ENCODE measurements at regions of chr22 and their contacts with region 1.

Region 1: GRCh38 chr22:23225724-23226496 is 45.6 kb downstream of the BCR start:
- DNase-seq: peak; percentile 84
- H3K4me3 ChIP-seq: peak overlapping the region in 2 of 3 experiments; percentile 27 to 34
- H3K27ac ChIP-seq: peak overlapping the region; percentile 91
- H3K4me1 ChIP-seq: peaks cover 47% of the 10 kb centered on the region
- H3K27me3 ChIP-seq: no peaks in the 10 kb centered on the region
- CTCF ChIP-seq: no peak

Region 2: DNA sequence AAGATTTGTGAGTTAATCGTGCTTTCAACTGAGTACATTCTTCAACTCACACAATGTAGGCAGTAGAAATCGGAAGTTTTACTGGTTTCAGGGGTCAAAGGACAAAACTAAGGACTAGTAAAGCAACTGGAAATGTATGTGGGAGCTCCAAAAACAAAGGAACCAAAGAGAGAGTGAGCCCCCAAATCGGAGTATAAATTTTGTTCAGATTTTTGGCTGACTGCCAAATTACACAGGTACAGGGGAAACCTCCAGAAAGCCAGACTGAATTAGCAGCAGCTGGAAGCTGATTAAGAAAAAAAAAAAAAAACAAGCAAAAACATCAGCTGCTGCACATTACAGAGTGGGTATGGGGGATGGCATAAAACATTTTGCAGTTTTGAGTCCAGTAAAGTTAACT is 230.7 kb before region 1 on chr22:
- CTCF ChIA-PET with region 1: no interaction called
- dilution Hi-C with region 1: no loop called
- in situ Hi-C with region 1: no loop called
- intact Hi-C with region 1: no loop called
- DNase-seq: no peak
- H3K4me3 ChIP-seq: no peak overlapping the region
- H3K27ac ChIP-seq: no peak overlapping the region
- H3K4me1 ChIP-seq: no peaks in the 10 kb centered on the region
- H3K27me3 ChIP-seq: no peaks in the 10 kb centered on the region
- CTCF ChIP-seq: no peak

Region 3: DNA sequence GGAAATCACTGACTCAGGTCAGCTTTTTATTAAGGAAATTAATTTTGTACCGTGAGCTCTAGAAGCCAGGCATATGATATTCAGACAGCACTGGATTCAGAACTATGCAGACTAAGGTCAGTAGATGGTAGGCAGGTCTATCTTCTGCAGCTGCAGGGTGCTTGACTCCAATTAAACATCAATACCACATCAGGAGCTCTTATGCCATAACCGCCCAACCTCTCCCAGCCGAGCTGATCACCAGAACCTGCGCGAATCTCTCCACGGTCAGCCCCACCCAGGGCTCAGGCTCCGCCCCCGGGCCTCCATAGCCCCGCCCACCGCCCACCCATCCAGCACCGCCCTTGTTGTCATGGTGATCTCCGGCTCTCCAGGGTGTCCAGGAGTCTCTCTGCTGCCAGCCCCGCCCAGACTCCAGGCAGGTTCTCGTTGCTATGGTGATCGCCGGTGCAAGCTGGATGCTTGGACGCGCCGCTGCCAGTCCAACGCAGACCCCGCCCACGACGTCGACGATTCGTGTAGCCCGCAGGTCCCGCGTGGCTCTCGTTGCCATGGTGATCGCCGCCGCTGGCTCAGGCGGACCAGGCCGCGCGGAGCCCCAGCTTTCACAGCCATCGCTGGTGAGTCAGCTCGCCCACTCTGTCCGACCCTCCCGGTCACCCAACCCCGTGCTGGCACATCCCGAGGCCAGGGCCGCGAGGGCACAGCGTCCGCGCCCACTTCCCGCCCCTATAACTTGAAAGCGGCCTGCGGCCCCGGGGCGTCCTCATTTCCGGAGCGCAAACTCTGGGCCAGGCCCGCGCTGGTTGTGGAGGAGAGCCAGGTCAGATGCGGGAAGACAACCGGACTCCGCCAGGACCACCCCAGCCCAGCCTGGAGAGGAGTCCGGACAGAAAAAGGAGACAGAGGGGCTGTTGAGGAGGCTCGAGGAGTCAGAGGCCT is 80.7 kb before region 1 on chr22 and contains the start of gene RAB36:
- CTCF ChIA-PET with region 1: no interaction called
- dilution Hi-C with region 1: no loop called
- in situ Hi-C with region 1: no loop called
- intact Hi-C with region 1: no loop called
- DNase-seq: peak; percentile 99
- H3K4me3 ChIP-seq: peak within 1 kb of the TSS; percentile 54 to 64 (median 60)
- H3K27ac ChIP-seq: peak within 1 kb of the TSS; percentile 89
- H3K4me1 ChIP-seq: peaks cover 18% of the 10 kb centered on the region
- H3K27me3 ChIP-seq: no peaks in the 10 kb centered on the region
- CTCF ChIP-seq: no peak
- total RNA-seq, gene RAB36: 8.6 to 8.7 TPM

Region 4: GRCh38 chr22:23187871-23188700 is 37.8 kb before region 1 on chr22:
- CTCF ChIA-PET with region 1: no interaction called
- dilution Hi-C with region 1: loop called (anchors 5 kb)
- in situ Hi-C with region 1: loop called in 1 of 2 experiments (anchors 10 kb)
- intact Hi-C with region 1: loop called (anchors 2 kb)
- DNase-seq: no peak
- H3K4me3 ChIP-seq: no peak overlapping the region
- H3K27ac ChIP-seq: no peak overlapping the region
- H3K4me1 ChIP-seq: peaks cover 9% of the 10 kb centered on the region
- H3K27me3 ChIP-seq: no peaks in the 10 kb centered on the region
- CTCF ChIP-seq: no peak

Measured in mammary epithelial cell (primary cell).